ENCODE measurements at regions of chr7 and their contacts with region 1.

Region 1: GRCh38 chr7:50739744-50740435 is 42.8 kb downstream of the GRB10 start:
- DNase-seq: peak; percentile 65
- H3K4me3 Mint-ChIP-seq: peak overlapping the region; percentile 54
- H3K27ac Mint-ChIP-seq: peak overlapping the region; percentile 73
- H3K4me1 Mint-ChIP-seq: peaks cover 20% of the 10 kb centered on the region
- H3K27me3 Mint-ChIP-seq: no peaks in the 10 kb centered on the region

Region 2: DNA sequence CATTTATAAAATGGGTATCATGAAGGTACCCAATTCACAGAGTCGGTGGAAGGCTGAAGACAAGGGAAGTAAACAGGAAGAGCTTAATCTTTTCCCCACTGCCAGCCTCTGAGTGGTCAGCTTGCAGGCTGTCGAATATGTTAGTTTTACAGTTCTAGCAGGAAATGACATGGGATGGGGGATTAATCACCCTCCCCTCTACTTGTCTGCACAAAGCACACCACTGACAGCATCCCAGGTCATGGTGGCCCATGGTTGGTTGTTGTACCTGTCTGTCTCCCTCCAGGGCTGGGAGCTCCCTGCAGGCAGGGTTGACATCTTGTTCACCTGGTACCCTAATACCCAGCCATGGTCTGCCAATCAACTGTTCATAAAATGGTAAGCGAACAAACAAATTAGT is 12.8 kb before region 1 on chr7:
- intact Hi-C with region 1: loop called (anchors 2 kb)
- DNase-seq: no peak
- H3K4me3 Mint-ChIP-seq: no peak overlapping the region
- H3K27ac Mint-ChIP-seq: no peak overlapping the region
- H3K4me1 Mint-ChIP-seq: no peaks in the 10 kb centered on the region
- H3K27me3 Mint-ChIP-seq: peaks cover 3% of the 10 kb centered on the region

Region 3: DNA sequence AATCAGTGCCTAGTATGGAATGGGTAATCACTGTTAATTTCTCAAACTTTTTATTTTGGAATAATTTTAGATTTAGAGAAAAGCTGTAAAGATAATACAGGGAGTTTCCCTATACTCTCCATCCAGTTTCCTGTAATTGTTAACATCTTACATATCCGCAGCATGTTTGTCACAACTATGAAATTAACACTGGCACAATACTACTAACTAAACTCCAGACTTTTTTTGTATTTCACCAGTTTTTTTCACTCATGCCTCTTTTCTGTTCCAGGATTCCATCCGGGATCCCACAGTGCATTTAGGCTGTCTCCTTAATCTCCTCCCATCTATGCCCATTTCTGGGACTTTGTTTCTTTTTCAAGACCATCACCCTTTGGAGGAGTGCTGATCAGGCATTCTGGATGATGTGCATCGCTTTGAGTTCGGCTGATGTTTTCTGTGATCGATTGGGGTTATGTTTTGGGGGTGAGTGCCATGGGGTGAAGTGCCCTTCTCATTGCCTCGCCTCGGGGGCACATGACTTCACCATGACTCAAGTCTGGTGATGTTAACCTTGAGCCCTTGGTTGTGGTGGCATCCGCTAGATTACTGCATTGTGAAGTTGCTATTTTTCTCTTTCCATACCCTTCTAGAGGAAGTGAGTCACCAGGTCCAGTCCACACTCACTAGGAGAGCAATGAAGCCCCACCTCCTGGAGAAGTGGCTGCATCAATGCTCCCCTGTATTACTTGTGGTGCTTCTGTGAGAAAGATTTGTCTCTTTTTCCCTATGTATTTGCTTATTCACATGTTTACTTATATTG is 86.7 kb after region 1 on chr7:
- intact Hi-C with region 1: loop called (anchors 5 kb)
- DNase-seq: peak; percentile 40
- H3K4me3 Mint-ChIP-seq: no peak overlapping the region
- H3K27ac Mint-ChIP-seq: peak overlapping the region; percentile 71
- H3K4me1 Mint-ChIP-seq: peaks cover 27% of the 10 kb centered on the region
- H3K27me3 Mint-ChIP-seq: peaks cover 13% of the 10 kb centered on the region

Region 4: DNA sequence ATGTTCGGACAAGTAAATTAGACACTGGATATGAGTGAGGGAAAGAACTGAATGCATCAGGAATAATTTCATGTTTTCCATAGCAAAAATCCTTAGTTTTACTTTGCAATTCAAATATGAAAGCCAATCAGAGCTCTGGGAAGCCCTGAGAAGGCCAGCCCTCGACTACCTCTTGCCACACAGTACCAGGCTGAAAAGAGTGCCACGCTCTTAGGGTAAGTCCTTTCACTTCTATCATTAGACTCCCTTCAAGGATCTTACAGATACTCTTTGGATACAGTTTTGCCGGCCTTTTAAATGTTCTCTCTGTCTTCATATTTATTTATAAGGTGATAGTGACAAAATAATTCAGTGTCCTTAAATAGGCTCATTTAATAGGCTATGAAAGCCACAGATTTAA is 574.8 kb after region 1 on chr7:
- intact Hi-C with region 1: no loop called
- DNase-seq: no peak
- H3K4me3 Mint-ChIP-seq: no peak overlapping the region
- H3K27ac Mint-ChIP-seq: no peak overlapping the region
- H3K4me1 Mint-ChIP-seq: peaks cover 2% of the 10 kb centered on the region
- H3K27me3 Mint-ChIP-seq: peaks cover 54% of the 10 kb centered on the region